ENCODE measurements at regions of chr3 and their contacts with region 1.

Region 1: GRCh38 chr3:17258823-17259436 is 374.2 kb downstream of the PLCL2 start:
- DNase-seq: peak in 1 of 2 experiments; percentile 30
- H3K4me3 ChIP-seq: no peak overlapping the region
- H3K4me3 Mint-ChIP-seq: no peak overlapping the region
- H3K27ac Mint-ChIP-seq: no peak overlapping the region
- H3K4me1 ChIP-seq: no peaks in the 10 kb centered on the region
- H3K4me1 Mint-ChIP-seq: no peaks in the 10 kb centered on the region
- H3K27me3 ChIP-seq: no peaks in the 10 kb centered on the region
- H3K27me3 Mint-ChIP-seq: no peaks in the 10 kb centered on the region
- CTCF ChIP-seq: peak; percentile 59 to 64

Region 2: GRCh38 chr3:17307482-17307881 is 48.6 kb after region 1 on chr3:
- CTCF ChIA-PET with region 1: no interaction called
- POLR2A ChIA-PET with region 1: no interaction called
- intact Hi-C with region 1: loop called (anchors 2 kb)
- DNase-seq: no peak
- H3K4me3 ChIP-seq: no peak overlapping the region
- H3K4me3 Mint-ChIP-seq: no peak overlapping the region
- H3K27ac Mint-ChIP-seq: no peak overlapping the region
- H3K4me1 ChIP-seq: no peaks in the 10 kb centered on the region
- H3K4me1 Mint-ChIP-seq: no peaks in the 10 kb centered on the region
- H3K27me3 ChIP-seq: no peaks in the 10 kb centered on the region
- H3K27me3 Mint-ChIP-seq: no peaks in the 10 kb centered on the region
- CTCF ChIP-seq: peak in 1 of 2 experiments; percentile 3

Region 3: GRCh38 chr3:17407576-17407975 is 148.6 kb after region 1 on chr3:
- CTCF ChIA-PET with region 1: no interaction called
- POLR2A ChIA-PET with region 1: no interaction called
- intact Hi-C with region 1: loop called (anchors 1 kb)
- DNase-seq: no peak
- H3K4me3 ChIP-seq: no peak overlapping the region
- H3K4me3 Mint-ChIP-seq: no peak overlapping the region
- H3K27ac Mint-ChIP-seq: no peak overlapping the region
- H3K4me1 ChIP-seq: no peaks in the 10 kb centered on the region
- H3K4me1 Mint-ChIP-seq: no peaks in the 10 kb centered on the region
- H3K27me3 ChIP-seq: no peaks in the 10 kb centered on the region
- H3K27me3 Mint-ChIP-seq: no peaks in the 10 kb centered on the region
- CTCF ChIP-seq: no peak

Region 4: DNA sequence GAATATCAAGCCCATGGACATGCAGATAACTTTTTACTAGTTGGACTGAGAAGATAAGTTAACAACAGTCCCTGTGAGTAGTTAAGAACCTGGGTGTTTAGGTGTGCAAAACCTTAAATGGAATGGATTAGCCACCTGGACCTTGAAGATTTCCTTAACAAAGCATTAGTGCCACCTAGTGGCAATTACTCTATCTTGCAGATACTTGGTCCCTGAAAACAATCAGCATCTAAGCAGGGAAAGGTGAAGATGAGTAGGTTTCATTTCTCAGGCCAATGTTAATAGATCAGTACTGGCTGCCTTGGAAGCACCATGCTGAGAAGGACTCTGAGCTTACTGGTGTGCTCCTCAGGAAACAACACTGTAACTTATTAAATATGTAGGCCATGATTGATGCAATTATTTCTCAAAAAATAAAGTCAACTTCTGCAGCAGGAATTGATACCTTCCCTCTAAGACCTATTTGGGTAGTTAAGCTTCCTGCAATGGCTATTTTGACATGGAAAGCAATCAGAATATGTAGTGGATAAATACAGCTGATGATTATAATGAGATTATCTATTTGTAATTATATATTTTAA is 154.1 kb after region 1 on chr3:
- CTCF ChIA-PET with region 1: no interaction called
- POLR2A ChIA-PET with region 1: no interaction called
- intact Hi-C with region 1: loop called (anchors 1 kb)
- DNase-seq: peak in 1 of 2 experiments; percentile 51
- H3K4me3 ChIP-seq: no peak overlapping the region
- H3K4me3 Mint-ChIP-seq: no peak overlapping the region
- H3K27ac Mint-ChIP-seq: no peak overlapping the region
- H3K4me1 ChIP-seq: no peaks in the 10 kb centered on the region
- H3K4me1 Mint-ChIP-seq: no peaks in the 10 kb centered on the region
- H3K27me3 ChIP-seq: no peaks in the 10 kb centered on the region
- H3K27me3 Mint-ChIP-seq: no peaks in the 10 kb centered on the region
- CTCF ChIP-seq: peak; percentile 62 to 71

Region 5: DNA sequence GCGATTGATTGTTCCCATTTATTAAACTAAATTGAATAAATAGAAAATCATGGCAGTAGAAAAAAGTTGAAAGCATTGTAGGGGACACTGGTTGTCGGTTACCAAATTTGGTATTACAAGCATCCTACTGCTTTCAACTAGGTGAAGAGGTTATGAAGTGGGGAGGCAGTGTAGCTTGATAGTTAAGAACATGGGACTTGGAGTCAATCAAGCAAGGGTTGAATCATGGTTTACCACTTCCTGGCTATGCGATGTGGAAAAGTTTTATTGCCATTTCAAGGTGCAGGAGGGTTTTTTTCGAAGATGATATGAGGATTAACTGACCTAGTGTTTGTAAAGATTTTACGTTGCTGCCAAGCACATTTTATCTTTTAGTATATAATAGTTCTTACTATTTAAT is 1571.2 kb after region 1 on chr3:
- CTCF ChIA-PET with region 1: no interaction called
- POLR2A ChIA-PET with region 1: no interaction called
- intact Hi-C with region 1: no loop called
- DNase-seq: no peak
- H3K4me3 ChIP-seq: no peak overlapping the region
- H3K4me3 Mint-ChIP-seq: no peak overlapping the region
- H3K27ac Mint-ChIP-seq: no peak overlapping the region
- H3K4me1 ChIP-seq: no peaks in the 10 kb centered on the region
- H3K4me1 Mint-ChIP-seq: peaks cover 8% of the 10 kb centered on the region
- H3K27me3 ChIP-seq: no peaks in the 10 kb centered on the region
- H3K27me3 Mint-ChIP-seq: no peaks in the 10 kb centered on the region
- CTCF ChIP-seq: no peak

Measured in Caco-2 (cell line).